ENCODE measurements at regions of chr16 and their contacts with region 1.

Region 1: GRCh38 chr16:8958344-8959167 is 5.2 kb downstream of the USP7 start:
- DNase-seq: peak in 1 of 9 donors; percentile 20
- ATAC-seq: peak; percentile 6
- H3K4me3 ChIP-seq: peak overlapping the region; percentile 46
- H3K4me3 Mint-ChIP-seq: peak overlapping the region; percentile 79 to 98 (median 93)
- H3K27ac ChIP-seq: peak overlapping the region; percentile 14
- H3K27ac Mint-ChIP-seq: peak overlapping the region; percentile 36 to 94 (median 79)
- H3K4me1 ChIP-seq: peaks cover 70 to 76% of the 10 kb centered on the region in 2 donors
- H3K4me1 Mint-ChIP-seq: peaks cover 64 to 83% (median 76%) of the 10 kb centered on the region in 7 donors
- H3K27me3 ChIP-seq: no peaks in the 10 kb centered on the region
- H3K27me3 Mint-ChIP-seq: no peaks in the 10 kb centered on the region

Region 2: DNA sequence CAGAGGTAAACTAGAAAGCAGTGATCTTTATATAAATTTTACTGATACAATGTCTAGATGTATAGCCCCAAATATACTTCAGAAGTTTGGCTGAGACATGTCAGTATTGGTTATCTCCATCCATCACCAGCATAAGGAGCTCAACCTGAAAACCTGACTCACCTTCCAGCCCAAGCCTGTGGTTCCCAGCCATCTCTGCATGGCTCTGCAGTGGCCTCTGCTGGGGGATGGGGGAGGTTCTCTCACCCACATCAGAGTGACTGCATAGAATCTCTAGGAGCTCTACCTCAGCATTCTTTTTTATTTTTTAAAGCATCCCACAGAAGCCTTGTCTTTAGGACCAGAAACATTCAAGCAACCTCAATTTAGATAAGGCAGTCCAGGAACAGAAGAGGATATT is 22.1 kb before region 1 on chr16:
- CTCF ChIA-PET with region 1: interaction called, 4 read pairs
- POLR2A ChIA-PET with region 1: interaction called, 4 read pairs
- intact Hi-C with region 1: loop called (anchors 1 to 2 kb)
- DNase-seq: peak; percentile 29 to 75 (median 60)
- ATAC-seq: peak; percentile 94
- H3K4me3 ChIP-seq: no peak overlapping the region
- H3K4me3 Mint-ChIP-seq: peak overlapping the region in 8 of 10 donors; percentile 3 to 60 (median 38)
- H3K27ac ChIP-seq: no peak overlapping the region
- H3K27ac Mint-ChIP-seq: peak overlapping the region in 6 of 9 donors; percentile 21 to 87 (median 63)
- H3K4me1 ChIP-seq: peaks cover 35 to 43% of the 10 kb centered on the region in 2 donors
- H3K4me1 Mint-ChIP-seq: peaks cover 54 to 98% (median 93%) of the 10 kb centered on the region in 7 donors
- H3K27me3 ChIP-seq: no peaks in the 10 kb centered on the region
- H3K27me3 Mint-ChIP-seq: no peaks in the 10 kb centered on the region

Region 3: GRCh38 chr16:8943966-8944759 is 14.4 kb before region 1 on chr16:
- CTCF ChIA-PET with region 1: interaction called, 4 read pairs
- POLR2A ChIA-PET with region 1: interaction called, 6 read pairs
- intact Hi-C with region 1: loop called (anchors 2 kb)
- DNase-seq: no peak
- ATAC-seq: peak; percentile 53
- H3K4me3 ChIP-seq: no peak overlapping the region
- H3K4me3 Mint-ChIP-seq: peak overlapping the region; percentile 68 to 82 (median 75)
- H3K27ac ChIP-seq: no peak overlapping the region
- H3K27ac Mint-ChIP-seq: peak overlapping the region; percentile 28 to 82 (median 69)
- H3K4me1 ChIP-seq: peaks cover 60 to 73% of the 10 kb centered on the region in 2 donors
- H3K4me1 Mint-ChIP-seq: peaks cover 71 to 100% (median 97%) of the 10 kb centered on the region in 7 donors
- H3K27me3 ChIP-seq: no peaks in the 10 kb centered on the region
- H3K27me3 Mint-ChIP-seq: no peaks in the 10 kb centered on the region